Activated CD8-positive, alpha-beta T cell treated with anti-CD3 and anti-CD28 coated beads for 36 hours (primary cell): ENCODE measurements at regions of chr12 and their contacts with region 1.

Region 1: DNA sequence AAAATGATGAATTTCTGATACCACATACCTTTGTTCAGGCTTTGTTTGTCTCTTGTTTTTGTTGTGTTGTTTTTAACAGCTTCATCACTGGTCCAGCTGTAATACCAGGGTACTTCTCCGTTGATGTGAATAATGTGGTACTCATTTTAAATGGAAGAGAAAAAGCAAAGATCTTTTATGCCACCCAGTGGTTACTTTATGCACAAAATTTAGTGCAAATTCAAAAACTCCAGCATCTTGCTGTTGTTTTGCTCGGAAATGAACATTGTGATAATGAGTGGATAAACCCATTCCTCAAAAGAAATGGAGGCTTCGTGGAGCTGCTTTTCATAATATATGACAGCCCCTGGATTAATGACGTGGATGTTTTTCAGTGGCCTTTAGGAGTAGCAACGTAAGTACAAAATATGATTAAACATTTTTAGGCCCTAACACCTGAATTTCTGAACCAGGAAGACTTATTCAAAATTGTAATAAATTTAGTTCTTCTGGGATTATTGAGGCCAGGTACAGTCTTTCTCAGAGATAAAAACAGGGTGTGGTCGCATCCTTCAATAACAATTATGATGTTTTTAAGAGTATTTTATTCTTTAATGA is 22.4 kb downstream of the RXYLT1 start:
- DNase-seq: no peak
- ATAC-seq: no peak
- H3K4me3 Mint-ChIP-seq: no peak overlapping the region
- H3K27ac Mint-ChIP-seq: no peak overlapping the region
- H3K4me1 Mint-ChIP-seq: no peaks in the 10 kb centered on the region
- H3K27me3 Mint-ChIP-seq: no peaks in the 10 kb centered on the region
- CTCF ChIP-seq: peak; percentile 55

Region 2: DNA sequence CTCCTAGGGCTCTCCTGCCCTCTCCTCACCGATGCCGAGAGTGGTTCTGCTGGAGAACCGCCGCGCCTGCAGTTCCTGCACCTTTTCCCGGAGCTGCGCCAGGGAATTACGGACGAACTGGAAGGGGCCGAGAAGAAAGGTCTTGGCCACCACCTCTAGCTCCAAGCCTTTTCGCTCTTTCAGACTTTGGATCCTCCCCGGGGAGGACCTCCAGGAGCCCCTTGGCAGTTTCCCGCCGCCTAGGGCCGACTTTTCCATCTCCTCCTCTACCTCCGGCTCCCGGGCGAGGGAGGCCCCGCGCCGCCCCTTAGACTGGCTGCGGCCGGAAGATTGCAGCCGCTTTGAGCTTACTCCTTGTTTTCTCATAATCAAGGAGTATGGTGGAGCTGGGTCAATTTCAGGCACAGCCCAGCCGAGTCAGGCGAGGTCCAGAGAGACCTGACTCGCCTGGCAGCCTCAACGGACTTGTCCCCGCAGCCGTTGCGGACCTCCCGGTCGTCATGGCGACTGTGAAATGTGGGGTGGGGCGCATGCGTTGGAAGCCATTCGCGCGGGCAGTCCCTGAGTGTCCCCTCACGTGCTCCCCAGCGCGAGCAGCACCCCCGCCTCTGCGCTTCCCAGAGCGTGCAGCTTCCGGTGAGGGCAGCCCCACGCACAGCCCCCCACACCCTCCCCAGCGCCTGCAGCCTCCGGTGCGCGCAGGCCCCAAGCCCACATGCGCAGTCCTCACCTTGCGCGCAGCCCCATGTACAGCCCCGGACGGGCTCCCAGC is 133.9 kb before region 1 on chr12 and contains the start of gene DPY19L2:
- CTCF ChIA-PET with region 1: interaction called, 3 read pairs
- POLR2A ChIA-PET with region 1: no interaction called
- intact Hi-C with region 1: loop called (anchors 10 kb)
- DNase-seq: peak; percentile 87
- ATAC-seq: peak; percentile 94
- H3K4me3 Mint-ChIP-seq: peak within 1 kb of the TSS; percentile 85
- H3K27ac Mint-ChIP-seq: peak within 1 kb of the TSS; percentile 85
- H3K4me1 Mint-ChIP-seq: peaks cover 32% of the 10 kb centered on the region
- H3K27me3 Mint-ChIP-seq: no peaks in the 10 kb centered on the region
- CTCF ChIP-seq: no peak
- total RNA-seq, gene DPY19L2: 6.1 to 6.4 TPM

Region 3: DNA sequence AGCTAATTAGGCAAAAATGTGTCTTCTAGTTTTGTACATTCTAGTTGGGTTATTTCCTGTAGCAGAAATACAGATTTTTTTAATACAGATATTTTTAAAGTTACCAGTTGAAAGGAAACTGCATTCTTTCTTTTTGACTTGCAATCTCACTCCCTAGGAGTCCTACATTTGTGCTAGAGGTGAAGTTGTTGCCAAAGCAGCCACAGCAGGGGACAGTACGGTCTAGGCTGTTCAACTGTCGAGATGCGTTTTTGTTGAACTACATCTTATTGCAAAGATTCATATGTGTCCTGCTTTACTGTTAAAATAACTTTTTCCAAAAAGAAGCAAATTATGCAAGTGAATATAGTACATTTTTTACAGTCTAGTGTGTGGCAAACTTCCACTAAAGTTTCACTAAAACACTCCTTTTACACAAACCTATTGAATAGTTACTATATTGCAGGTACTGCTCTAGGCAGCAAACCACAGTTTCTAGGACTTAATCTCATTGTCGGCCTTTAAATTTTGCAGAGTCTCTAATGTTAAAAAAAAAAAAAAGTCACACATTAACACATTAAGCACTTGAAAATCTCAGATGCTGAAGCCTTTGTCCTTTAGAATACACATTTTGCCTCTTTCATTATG is 12.1 kb after region 1 on chr12:
- CTCF ChIA-PET with region 1: interaction called, 16 read pairs
- POLR2A ChIA-PET with region 1: no interaction called
- intact Hi-C with region 1: no loop called
- DNase-seq: no peak
- ATAC-seq: peak; percentile 17
- H3K4me3 Mint-ChIP-seq: no peak overlapping the region
- H3K27ac Mint-ChIP-seq: peak overlapping the region; percentile 83
- H3K4me1 Mint-ChIP-seq: peaks cover 27% of the 10 kb centered on the region
- H3K27me3 Mint-ChIP-seq: peaks cover 3% of the 10 kb centered on the region
- CTCF ChIP-seq: no peak

Region 4: DNA sequence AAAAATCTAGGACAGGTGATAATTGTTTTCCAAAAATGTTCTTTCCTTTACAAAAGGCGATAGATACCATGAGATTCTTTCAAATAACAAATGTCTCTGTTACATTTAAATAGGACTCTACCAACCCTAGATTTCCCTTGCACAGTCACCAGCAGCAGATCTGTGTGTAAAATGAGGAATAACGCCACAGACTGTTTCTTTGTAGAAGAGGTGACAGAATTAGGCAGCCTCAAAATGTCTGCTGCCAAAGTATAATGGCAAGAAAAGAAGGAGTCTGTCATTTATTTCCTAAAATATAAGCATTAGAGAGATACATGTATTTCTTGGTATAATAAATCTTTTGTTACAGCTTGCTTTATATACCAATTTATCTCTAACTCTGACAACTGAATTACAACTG is 33.9 kb after region 1 on chr12:
- CTCF ChIA-PET with region 1: no interaction called
- POLR2A ChIA-PET with region 1: no interaction called
- intact Hi-C with region 1: no loop called
- DNase-seq: no peak
- ATAC-seq: no peak
- H3K4me3 Mint-ChIP-seq: no peak overlapping the region
- H3K27ac Mint-ChIP-seq: no peak overlapping the region
- H3K4me1 Mint-ChIP-seq: no peaks in the 10 kb centered on the region
- H3K27me3 Mint-ChIP-seq: peaks cover 10% of the 10 kb centered on the region
- CTCF ChIP-seq: no peak

Region 5: DNA sequence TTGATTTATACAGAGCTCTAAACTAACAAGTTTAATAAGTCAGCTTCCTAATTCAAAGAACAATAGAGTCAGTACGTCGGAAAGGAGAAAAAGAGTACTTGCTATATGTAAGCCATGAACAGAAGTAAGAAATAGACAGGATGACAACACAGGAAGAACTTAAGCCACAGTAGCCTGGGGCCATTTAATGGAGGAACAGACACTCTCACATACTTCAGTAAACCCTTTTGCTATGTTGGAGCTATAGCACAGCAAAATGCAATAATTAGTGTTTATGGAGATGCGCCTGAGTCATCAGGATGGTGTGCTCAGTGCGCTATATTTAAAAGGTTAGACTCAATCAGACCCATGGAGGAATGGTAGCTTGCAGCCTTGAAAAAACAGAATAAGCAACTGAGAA is 103.4 kb after region 1 on chr12:
- CTCF ChIA-PET with region 1: no interaction called
- POLR2A ChIA-PET with region 1: no interaction called
- intact Hi-C with region 1: no loop called
- DNase-seq: no peak
- ATAC-seq: no peak
- H3K4me3 Mint-ChIP-seq: no peak overlapping the region
- H3K27ac Mint-ChIP-seq: no peak overlapping the region
- H3K4me1 Mint-ChIP-seq: no peaks in the 10 kb centered on the region
- H3K27me3 Mint-ChIP-seq: peaks cover 9% of the 10 kb centered on the region
- CTCF ChIP-seq: no peak